PC-9 (cell line): ENCODE measurements at regions of chr14 and their contacts with region 1.

Region 1: DNA sequence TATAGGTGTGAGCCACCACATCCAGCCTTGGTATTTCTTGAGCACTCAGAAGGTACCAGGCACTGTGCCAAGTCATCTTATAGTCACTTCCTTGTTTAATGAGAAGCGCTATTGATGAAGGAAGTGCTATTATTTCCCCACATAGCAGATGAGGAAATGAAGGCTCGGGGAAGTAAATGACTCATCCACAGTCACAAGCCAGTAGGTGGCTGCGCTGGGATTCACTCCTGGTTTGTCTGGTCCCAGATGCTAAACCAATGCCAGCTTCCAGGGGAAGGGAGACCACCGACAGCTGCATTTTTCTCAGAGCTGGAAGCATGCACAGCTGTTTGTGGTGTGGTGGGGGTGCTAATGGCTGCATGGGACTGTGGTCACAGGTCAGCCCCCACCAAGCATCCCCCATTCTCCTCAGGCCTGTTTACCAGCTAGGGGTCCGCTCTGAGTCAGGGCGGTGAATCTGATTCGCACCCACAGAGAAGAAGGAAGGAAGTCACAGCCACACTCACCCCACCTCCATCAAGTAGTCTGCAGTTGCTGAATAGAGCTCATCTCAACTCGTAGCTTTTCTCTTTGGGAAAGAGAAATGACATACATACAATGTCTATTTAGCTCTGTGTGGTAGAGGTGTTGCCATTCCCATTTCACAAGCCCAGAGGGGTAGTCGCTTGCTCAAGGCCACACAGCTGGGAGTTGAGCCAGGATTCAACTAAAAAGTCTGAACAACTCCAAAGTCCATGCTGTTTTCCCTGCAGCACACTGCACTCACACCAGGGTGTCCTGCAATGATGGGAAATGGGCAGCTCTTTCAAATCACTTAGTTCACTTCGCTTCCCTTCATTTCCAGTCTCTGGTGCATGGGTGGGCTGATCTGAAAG is 6.3 kb upstream of the LTBP2 start:
- DNase-seq: peak; percentile 67 to 100
- H3K4me3 ChIP-seq: no peak overlapping the region
- H3K27ac ChIP-seq: peak overlapping the region; percentile 84
- H3K4me1 ChIP-seq: peaks cover 99% of the 10 kb centered on the region
- H3K27me3 ChIP-seq: no peaks in the 10 kb centered on the region
- CTCF ChIP-seq: no peak

Region 2: DNA sequence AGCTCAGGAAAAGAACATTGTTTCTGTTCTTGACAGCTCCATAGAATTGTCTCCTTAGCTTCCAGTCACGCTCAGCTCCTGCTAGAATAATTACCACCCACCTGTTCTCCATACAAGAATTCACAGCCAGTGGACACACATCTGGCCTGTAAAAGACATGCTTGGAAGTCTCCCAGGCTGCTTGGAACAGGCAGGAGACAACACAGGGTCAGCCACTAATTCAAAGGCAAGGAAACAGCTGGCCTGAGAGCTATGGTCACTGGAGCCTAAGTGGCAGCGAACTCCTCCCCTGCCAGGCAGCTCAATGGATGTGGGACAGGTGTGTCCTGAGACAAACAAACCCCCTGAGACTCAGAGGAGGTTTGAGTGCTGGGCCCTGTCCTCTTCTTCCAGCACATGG is 16.6 kb after region 1 on chr14:
- CTCF ChIA-PET with region 1: interaction called, 3 read pairs
- POLR2A ChIA-PET with region 1: interaction called, 19 read pairs
- intact Hi-C with region 1: no loop called
- DNase-seq: no peak
- H3K4me3 ChIP-seq: no peak overlapping the region
- H3K27ac ChIP-seq: no peak overlapping the region
- H3K4me1 ChIP-seq: peaks cover 9% of the 10 kb centered on the region
- H3K27me3 ChIP-seq: no peaks in the 10 kb centered on the region
- CTCF ChIP-seq: no peak

Region 3: GRCh38 chr14:74647678-74648461 is 29.6 kb after region 1 on chr14:
- CTCF ChIA-PET with region 1: interaction called, 4 read pairs
- POLR2A ChIA-PET with region 1: interaction called, 7 read pairs
- intact Hi-C with region 1: loop called (anchors 1 kb)
- DNase-seq: peak in 1 of 2 experiments; percentile 71
- H3K4me3 ChIP-seq: no peak overlapping the region
- H3K27ac ChIP-seq: no peak overlapping the region
- H3K4me1 ChIP-seq: peaks cover 39% of the 10 kb centered on the region
- H3K27me3 ChIP-seq: no peaks in the 10 kb centered on the region
- CTCF ChIP-seq: no peak

Region 4: GRCh38 chr14:74655599-74656389 is 37.5 kb after region 1 on chr14:
- CTCF ChIA-PET with region 1: interaction called, 14 read pairs
- POLR2A ChIA-PET with region 1: interaction called, 3 read pairs
- intact Hi-C with region 1: loop called (anchors 1 kb)
- DNase-seq: peak; percentile 58 to 96
- H3K4me3 ChIP-seq: no peak overlapping the region
- H3K27ac ChIP-seq: peak overlapping the region; percentile 78
- H3K4me1 ChIP-seq: peaks cover 59% of the 10 kb centered on the region
- H3K27me3 ChIP-seq: no peaks in the 10 kb centered on the region
- CTCF ChIP-seq: no peak; the same call in 1 of the 2 replicates

Region 5: GRCh38 chr14:74739293-74740030 is 121.1 kb after region 1 on chr14:
- CTCF ChIA-PET with region 1: no interaction called
- POLR2A ChIA-PET with region 1: no interaction called
- intact Hi-C with region 1: no loop called
- DNase-seq: no peak
- H3K4me3 ChIP-seq: no peak overlapping the region
- H3K27ac ChIP-seq: no peak overlapping the region
- H3K4me1 ChIP-seq: no peaks in the 10 kb centered on the region
- H3K27me3 ChIP-seq: no peaks in the 10 kb centered on the region
- CTCF ChIP-seq: no peak

Region 6: DNA sequence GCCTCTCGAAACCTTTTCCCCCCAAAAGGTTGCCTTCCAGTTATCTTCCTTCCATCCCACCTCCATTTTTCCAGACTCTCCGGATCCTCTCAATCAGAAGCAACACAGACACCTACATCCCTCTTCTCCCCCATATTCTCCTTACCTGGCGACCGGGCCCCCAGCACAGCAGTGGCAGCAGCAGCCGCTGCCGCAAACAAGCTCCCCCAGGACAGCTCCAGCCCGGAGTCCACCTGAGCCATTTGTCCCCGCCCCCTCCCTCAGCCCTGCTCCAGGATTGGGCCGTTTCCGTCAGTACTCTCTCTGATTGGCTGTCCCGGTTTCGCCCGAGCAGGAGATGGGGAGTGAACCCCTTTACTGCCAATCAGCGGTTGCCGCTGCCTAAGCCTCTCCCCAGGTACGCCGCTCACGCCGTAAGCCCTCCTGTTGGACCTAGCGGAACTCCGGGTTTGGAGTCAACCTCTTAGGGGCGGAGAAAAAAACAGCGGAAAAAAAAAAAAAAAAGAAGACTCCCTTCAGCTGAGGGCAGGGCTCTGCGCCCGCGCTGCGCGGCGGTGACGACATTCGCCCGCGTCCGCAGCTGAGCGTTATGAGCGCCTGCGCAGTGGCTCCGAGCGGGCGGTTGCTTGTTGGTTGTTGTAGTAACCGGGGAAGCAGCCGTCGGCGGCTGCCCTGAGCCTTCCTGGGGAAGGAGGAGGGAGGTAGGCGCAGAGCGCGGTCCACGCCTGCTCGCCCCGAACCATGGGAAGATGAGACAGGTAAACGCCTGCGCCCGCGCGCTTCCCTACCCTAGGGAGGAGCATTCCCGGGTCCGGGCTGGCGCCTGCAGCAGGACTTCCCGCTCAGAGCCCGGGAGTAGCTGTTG is 1042.5 kb after region 1 on chr14 and contains the starts of genes ERG28 and TTLL5:
- CTCF ChIA-PET with region 1: no interaction called
- POLR2A ChIA-PET with region 1: no interaction called
- intact Hi-C with region 1: loop called (anchors 5 kb)
- DNase-seq: peak; percentile 97 to 99
- H3K4me3 ChIP-seq: peak within 1 kb of the TSS; percentile 99
- H3K27ac ChIP-seq: peak within 1 kb of the TSS; percentile 64
- H3K4me1 ChIP-seq: peaks cover 9% of the 10 kb centered on the region; the same call in 1 of the 2 replicates
- H3K27me3 ChIP-seq: no peaks in the 10 kb centered on the region
- CTCF ChIP-seq: no peak
- total RNA-seq, gene ERG28: 25.2 and 32.5 TPM in 2 replicates
- total RNA-seq, gene TTLL5: 60.3 and 75.3 TPM in 2 replicates